ENCODE measurements at regions of chr3 and their contacts with region 1.

Region 1: DNA sequence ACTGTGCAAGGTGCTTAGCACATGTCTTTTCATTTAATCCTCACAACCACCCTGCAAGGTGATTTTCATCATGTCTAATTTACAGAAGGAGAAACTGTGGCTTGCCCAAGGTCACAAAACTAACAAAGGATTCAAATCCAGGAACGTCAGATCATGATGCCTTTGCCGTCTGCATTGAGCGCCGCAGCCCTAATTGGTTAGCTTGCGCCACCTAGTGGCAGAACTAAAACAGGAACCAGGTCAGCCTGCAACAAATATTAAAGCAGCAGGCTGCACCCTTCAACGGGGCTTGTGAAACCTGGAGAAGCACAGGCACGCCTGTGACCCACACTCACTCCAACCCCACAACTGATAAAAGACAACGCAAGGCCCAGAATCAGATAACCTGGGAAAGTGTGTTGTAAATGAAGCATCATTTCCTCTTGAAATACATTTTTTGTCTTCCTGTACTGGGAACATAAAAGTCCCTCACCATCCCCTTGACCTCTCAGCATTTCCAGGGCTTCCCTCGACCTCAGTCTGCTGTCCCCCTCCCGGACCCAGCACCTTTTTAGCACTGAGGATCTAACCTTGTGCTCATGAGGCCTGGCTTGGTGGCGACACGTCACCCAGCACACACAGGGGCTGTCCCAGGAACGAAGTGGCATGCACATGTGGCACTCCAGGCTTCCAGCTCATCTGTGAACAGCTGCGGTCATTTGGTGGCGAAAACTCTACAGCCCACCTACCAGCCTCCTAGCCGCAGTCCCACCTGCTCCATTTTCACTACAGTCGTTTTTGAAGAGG is 17.3 kb downstream of the DPH3 start:
- DNase-seq: peak; percentile 78
- H3K4me3 Mint-ChIP-seq: peak overlapping the region; percentile 19
- H3K27ac Mint-ChIP-seq: no peak overlapping the region
- H3K4me1 Mint-ChIP-seq: peaks cover 23% of the 10 kb centered on the region
- H3K27me3 Mint-ChIP-seq: peaks cover 14% of the 10 kb centered on the region
- CTCF ChIP-seq: peak; percentile 76

Region 2: DNA sequence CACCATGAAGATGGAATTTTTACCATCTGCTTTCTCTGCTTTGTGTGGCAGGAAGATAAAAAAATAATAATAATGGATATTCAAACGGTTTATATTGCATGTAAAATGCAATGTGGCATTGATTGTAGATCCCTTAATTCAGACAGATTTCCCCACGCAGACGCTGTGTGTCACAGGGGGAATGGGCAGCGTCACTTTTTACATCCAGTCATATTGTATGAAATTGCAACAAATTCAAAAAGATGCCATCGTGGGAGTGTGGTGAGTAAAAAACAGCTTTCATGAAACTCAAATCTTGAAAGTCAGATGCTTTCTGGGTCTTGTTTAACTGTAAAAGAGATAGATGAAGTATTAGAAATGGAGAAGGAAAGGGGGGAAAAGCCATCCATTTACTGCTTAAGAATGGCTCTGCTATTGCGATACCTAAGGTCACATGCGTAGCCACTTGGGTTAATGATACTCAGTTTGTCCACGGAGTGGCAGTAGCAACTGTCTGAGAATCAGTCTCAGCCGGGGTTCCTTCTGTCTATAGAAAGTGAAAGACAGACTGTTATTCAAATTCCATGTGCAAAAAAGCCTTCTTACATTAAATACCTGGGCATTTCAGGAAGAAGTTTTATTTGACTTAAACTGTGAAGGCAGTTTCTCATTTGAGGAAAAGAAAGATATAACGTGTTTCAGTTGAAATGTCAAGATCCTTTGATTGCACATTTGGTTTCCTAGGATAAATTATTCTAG is 617.4 kb before region 1 on chr3:
- CTCF ChIA-PET with region 1: no interaction called
- intact Hi-C with region 1: loop called (anchors 5 kb)
- DNase-seq: peak; percentile 58
- H3K4me3 Mint-ChIP-seq: no peak overlapping the region
- H3K27ac Mint-ChIP-seq: peak overlapping the region; percentile 34
- H3K4me1 Mint-ChIP-seq: peaks cover 9% of the 10 kb centered on the region
- H3K27me3 Mint-ChIP-seq: no peaks in the 10 kb centered on the region
- CTCF ChIP-seq: no peak

Region 3: GRCh38 chr3:15815696-15816095 is 431.8 kb before region 1 on chr3:
- CTCF ChIA-PET with region 1: no interaction called
- intact Hi-C with region 1: loop called (anchors 2 kb)
- DNase-seq: no peak
- H3K4me3 Mint-ChIP-seq: no peak overlapping the region
- H3K27ac Mint-ChIP-seq: no peak overlapping the region
- H3K4me1 Mint-ChIP-seq: peaks cover 17% of the 10 kb centered on the region
- H3K27me3 Mint-ChIP-seq: no peaks in the 10 kb centered on the region
- CTCF ChIP-seq: no peak

Region 4: GRCh38 chr3:16048435-16049318 is 198.8 kb before region 1 on chr3:
- CTCF ChIA-PET with region 1: interaction called, 3 read pairs
- intact Hi-C with region 1: loop called (anchors 1 kb)
- DNase-seq: peak; percentile 67
- H3K4me3 Mint-ChIP-seq: peak overlapping the region; percentile 15
- H3K27ac Mint-ChIP-seq: no peak overlapping the region
- H3K4me1 Mint-ChIP-seq: peaks cover 9% of the 10 kb centered on the region
- H3K27me3 Mint-ChIP-seq: no peaks in the 10 kb centered on the region
- CTCF ChIP-seq: peak; percentile 58

Region 5: DNA sequence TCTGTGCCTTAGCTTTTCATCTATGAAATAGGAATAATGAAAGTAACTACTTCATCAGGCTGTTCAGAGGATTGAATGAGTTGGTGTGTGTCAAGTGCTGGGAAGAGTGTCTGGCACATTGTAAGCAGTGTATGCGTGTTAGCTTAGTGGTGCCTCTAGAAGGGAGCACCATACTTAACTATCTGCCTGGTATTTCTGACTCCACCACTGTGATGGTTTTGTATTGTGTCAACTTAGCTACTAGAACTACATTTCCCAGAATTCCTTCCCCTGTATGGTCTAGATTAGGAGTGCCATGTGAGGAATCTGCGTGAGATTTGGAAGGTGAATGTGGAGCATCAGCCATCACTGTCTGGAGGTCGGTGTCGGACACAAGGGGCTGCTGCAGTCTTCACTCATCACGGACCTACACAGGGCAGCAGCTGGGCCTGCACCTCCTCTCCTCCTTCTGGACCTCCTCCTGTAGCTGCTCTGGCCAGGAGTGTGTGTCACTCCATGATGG is 188.3 kb before region 1 on chr3:
- CTCF ChIA-PET with region 1: no interaction called
- intact Hi-C with region 1: no loop called
- DNase-seq: no peak
- H3K4me3 Mint-ChIP-seq: no peak overlapping the region
- H3K27ac Mint-ChIP-seq: peak overlapping the region; percentile 56
- H3K4me1 Mint-ChIP-seq: peaks cover 42% of the 10 kb centered on the region
- H3K27me3 Mint-ChIP-seq: no peaks in the 10 kb centered on the region
- CTCF ChIP-seq: no peak

Region 6: DNA sequence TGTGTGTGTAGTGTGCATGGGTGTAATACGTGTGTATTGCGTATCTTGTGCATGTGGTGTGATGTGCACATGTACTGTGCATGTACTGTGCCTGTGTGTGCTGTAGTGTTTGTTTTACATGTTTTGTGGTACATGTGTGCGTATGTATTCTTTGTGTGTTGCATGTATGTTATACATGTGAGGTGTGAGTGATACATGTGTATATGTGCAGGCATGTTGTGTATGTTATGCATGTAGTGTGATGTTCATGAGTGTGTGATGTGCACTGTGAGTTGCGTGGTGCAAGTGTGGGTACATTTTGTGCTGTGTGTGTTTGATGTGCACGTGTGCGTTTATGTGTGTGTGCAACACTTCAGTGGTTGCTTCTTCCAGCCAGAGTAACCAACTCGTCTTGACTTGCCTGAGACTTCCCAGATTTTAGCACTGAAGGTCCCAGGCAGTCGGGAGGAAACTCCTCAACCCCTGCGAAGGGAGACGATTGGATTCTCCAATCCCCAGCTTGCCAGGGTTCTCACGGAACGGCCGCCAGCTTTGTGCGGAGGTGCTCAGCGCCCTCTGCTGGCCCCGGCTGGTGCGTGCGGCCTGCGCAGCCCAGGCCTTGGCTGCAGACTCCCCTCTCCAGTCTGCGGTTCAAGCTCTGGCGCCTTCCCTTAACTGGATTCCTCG is 69.4 kb before region 1 on chr3:
- CTCF ChIA-PET with region 1: interaction called, 3 read pairs
- intact Hi-C with region 1: loop called (anchors 1 kb)
- DNase-seq: peak; percentile 83
- H3K4me3 Mint-ChIP-seq: no peak overlapping the region
- H3K27ac Mint-ChIP-seq: no peak overlapping the region
- H3K4me1 Mint-ChIP-seq: no peaks in the 10 kb centered on the region
- H3K27me3 Mint-ChIP-seq: peaks cover 34% of the 10 kb centered on the region
- CTCF ChIP-seq: peak; percentile 82

Measured in Calu3 (cell line).